Posterior cingulate gyrus (tissue), 11 donors: ENCODE measurements at regions of chr11 and their contacts with region 1.

Region 1: DNA sequence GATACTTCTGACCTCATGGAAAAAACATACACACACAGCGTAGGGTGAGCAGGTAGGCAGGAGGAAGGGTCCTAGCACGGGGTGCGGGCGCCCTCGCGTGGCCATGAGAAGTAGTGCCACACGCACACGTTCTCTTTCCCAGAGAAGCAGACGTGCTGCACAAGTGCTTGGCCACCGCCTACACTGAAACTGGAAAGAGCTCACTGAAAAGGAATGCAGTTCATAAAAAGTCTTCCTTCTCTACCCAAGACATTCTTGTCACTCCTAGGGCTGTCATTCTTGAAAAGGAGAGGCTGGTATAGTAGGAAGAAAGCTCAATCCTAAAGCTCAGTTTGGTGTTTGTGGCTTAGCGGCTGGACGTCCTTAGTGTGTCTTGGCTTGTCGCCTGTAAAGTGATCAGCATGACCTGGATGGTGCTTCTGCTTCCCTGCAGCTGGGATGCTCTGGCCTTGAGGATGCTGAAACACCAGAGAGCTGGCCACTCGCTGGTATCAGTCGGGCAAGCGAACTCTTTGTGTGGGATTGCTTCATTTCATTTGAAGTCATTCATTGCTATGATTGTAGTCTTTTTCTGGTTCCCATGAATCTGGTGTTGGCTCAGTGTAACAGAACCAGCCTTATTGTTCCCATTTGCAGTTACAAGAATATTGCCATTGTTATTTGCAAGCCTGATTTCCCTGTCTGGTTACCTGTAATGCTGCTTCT is 303.8 kb downstream of the NTM start:
- DNase-seq: peak; percentile 81 to 98 (median 92)

Region 2: DNA sequence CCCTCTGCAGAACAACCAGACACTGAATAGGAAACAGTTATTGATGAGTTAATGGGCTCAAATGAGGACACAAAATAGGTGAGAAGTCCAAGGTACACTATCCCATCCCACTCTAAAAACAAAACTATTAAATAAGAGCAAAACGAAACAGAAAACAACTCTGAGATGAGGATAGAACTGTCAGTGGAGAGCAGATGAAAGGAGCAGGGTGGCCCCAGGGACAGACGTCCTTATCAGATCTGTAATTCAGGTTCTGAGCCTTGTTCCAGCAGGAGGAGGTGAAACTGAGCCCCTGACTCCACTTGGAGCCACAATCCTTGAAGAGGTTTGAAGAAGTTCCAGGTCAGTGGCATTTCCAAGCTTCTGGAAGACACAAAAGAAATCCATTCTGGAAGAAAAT is 749.4 kb before region 1 on chr11:
- intact Hi-C with region 1: loop called (anchors 5 kb)
- DNase-seq: no peak

Region 3: DNA sequence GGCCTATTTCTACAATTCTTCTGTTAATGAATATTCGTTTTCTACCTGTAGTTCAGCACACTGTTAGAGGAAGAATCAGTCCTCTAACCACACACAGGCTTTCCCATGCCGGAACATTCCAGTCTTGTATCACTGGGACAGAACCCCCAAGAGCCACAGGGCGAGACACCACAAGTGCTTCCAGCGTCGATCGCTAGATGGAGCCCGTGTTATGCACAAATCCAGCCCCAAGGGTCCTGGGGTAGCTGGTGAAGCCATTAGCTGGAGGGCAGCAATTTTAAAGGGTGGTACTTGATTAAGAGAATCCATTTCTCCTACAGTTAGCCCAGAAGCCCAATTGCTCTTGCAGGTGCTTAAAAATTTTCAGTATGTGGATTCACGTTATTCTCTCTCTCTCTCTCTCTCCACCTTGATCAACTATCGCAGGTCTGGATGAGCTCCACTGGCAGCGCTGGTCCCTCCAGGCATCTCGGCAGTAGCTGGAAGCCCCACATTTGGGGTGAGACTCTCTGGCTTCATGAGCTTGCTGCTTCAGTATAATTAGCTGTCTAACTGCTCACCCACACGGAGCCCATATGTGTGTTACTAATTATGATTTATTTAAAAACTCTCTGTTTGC is 609.7 kb before region 1 on chr11:
- intact Hi-C with region 1: loop called (anchors 1 kb)
- DNase-seq: peak; percentile 41 to 95 (median 69)

Region 4: DNA sequence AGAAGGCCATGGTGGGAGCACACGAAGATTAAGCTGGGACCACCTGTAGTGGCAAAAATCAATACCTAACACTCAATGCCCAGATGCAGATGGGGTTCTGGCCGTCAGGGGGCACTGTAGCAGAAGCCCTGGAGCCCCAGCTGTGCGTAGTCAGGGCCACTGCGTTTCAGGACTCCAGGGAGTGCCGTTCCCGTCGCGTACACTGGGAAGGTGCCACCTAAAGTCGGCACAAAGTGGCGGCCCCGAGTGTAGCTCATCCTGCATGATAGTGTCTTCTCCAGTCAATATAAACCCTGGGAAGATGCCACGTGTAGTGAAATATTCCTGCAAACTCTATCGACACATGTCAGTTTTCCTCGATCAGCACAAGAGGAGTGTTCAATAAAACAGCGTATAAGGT is 427.5 kb before region 1 on chr11:
- intact Hi-C with region 1: loop called (anchors 10 kb)
- DNase-seq: peak; percentile 31 to 96 (median 78)

Region 5: DNA sequence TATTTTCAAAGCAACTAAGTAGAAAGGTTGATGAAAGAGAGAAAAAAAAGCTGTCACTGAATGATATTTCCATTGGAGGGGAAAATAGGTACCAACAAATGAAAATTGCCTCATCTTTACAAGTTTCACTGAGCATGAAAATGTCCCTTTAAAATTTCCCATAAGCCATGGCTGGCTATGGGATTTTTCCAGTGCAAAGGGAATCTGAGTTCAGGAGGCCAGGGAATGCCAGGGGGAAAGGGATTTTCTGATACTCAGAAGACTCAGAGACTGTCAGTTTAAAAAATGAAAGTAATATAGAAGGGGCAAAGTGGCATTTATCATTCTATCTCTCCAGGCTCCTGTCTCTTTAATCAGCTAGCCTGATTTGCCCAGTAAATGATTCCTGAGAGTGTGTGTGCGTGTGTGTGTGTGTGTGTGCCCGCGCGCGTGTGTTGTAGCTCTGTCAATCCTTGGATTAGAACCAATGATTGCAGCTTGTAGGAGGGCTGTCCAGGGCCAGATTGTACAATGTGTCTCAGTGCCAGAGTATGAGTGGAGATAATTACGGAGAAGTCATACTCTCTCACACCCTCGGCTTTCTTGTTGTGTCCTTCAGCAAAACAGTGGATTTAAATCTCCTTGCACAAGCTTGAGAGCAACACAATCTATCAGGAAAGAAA is 304.0 kb before region 1 on chr11 and contains the start of gene NTM:
- intact Hi-C with region 1: loop called (anchors 10 kb)
- DNase-seq: peak; percentile 55 to 95 (median 66)

Region 6: GRCh38 chr11:131584785-131585592 is 89.2 kb before region 1 on chr11:
- intact Hi-C with region 1: loop called (anchors 2 kb)
- DNase-seq: peak; percentile 88 to 99 (median 94)